Activated naive CD4-positive, alpha-beta T cell treated with anti-CD3 and anti-CD28 coated beads for 36 hours (primary cell): ENCODE measurements at regions of chr7 and their contacts with region 1.

Region 1: GRCh38 chr7:27196287-27196767 is 3.6 kb downstream of the HOXA13 start:
- DNase-seq: peak; percentile 92
- H3K4me3 Mint-ChIP-seq: no peak overlapping the region
- H3K27ac Mint-ChIP-seq: no peak overlapping the region
- H3K4me1 Mint-ChIP-seq: peaks cover 31% of the 10 kb centered on the region
- H3K27me3 Mint-ChIP-seq: peaks cover 76% of the 10 kb centered on the region

Region 2: DNA sequence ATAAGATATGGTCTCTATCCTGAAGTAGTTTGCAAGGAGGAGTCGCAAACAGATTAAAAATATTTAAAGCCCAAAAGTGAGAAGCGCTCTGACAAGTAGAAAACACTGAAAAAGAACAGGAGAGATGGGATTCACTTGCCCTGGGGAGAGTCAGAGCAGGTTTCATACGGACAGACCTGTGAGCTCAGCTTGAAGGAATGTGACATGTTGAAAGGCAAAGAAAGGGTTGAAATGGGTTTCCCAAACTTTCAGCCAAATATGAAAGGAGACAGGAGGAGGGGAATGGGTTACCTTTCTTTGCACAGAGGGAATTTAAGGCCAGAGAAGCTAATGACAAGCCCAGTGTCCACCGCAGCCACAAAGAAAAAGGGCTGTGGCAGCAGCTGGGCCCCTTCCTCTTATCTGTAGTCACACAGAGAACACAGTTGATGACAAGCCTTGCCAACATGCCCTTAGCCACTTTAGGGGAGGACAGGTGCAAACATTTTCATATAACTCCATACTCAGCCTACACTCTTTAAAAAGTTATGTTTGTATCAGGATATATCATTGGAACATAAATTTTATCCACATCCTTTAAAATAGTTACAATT is 115.4 kb before region 1 on chr7:
- CTCF ChIA-PET with region 1: no interaction called
- intact Hi-C with region 1: no loop called
- DNase-seq: no peak
- H3K4me3 Mint-ChIP-seq: no peak overlapping the region
- H3K27ac Mint-ChIP-seq: no peak overlapping the region
- H3K4me1 Mint-ChIP-seq: no peaks in the 10 kb centered on the region
- H3K27me3 Mint-ChIP-seq: peaks cover 3% of the 10 kb centered on the region

Region 3: DNA sequence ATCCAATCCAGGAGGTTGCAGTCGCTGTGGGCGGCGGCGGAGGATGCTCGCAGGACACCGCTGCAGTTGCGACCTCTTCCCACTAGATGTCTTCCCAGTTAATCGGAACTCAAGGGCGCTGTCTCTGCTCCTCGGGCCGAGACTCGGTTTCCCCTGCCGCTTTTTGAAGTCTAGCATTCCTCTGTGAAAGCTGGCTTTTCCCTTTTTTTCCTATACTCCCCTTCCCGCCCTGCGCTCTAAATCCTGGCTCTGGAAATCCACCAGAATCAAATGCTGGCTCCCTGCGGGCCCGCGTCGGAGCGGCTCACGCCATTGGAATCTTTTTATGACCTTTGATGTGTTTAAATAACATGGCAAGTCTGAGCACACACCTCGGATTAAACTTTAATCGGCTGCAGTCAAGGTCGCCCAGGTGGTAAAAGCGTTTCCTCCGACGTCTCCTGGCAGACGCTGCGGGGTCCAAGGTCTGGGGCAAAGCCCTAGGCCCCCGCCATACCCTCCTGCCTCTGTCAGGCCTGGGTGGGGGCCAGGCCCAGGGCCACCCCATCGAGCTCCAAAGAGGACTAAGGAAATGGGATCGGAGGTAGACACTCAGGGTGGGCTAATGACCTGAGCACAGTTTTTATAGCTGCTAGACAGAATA is 14.2 kb after region 1 on chr7:
- CTCF ChIA-PET with region 1: interaction called, 12 read pairs
- intact Hi-C with region 1: no loop called
- DNase-seq: peak; percentile 67
- H3K4me3 Mint-ChIP-seq: no peak overlapping the region
- H3K27ac Mint-ChIP-seq: no peak overlapping the region
- H3K4me1 Mint-ChIP-seq: peaks cover 20% of the 10 kb centered on the region
- H3K27me3 Mint-ChIP-seq: peaks cover 80% of the 10 kb centered on the region

Region 4: DNA sequence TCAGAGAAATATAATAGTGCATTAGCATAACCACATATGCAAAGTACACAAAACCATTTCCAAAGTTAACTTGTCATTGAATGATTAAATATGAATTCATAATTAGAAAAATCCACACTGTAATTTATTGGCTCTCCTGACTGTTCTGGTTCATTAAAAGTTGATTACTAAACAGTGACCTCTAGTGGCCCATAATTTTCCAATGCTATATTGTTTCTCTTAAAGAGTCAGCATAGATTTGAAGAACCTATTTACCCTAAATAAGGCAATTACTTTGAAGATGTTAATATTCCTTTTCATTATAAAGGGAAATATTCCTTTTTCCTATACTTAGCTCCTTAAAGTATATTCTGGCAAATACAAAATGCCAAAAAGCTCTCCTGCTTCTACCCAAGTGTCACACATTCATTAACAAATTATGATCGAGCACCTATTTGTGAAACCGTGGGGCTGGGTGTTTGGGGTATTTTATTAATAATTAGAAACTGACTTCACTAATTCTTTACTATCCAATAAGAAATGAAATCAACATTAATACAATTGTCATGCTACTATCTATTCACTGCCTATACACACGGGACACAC is 380.1 kb after region 1 on chr7:
- CTCF ChIA-PET with region 1: interaction called, 6 read pairs
- intact Hi-C with region 1: loop called (anchors 1 kb)
- DNase-seq: no peak
- H3K4me3 Mint-ChIP-seq: no peak overlapping the region
- H3K27ac Mint-ChIP-seq: no peak overlapping the region
- H3K4me1 Mint-ChIP-seq: no peaks in the 10 kb centered on the region
- H3K27me3 Mint-ChIP-seq: no peaks in the 10 kb centered on the region

Region 5: DNA sequence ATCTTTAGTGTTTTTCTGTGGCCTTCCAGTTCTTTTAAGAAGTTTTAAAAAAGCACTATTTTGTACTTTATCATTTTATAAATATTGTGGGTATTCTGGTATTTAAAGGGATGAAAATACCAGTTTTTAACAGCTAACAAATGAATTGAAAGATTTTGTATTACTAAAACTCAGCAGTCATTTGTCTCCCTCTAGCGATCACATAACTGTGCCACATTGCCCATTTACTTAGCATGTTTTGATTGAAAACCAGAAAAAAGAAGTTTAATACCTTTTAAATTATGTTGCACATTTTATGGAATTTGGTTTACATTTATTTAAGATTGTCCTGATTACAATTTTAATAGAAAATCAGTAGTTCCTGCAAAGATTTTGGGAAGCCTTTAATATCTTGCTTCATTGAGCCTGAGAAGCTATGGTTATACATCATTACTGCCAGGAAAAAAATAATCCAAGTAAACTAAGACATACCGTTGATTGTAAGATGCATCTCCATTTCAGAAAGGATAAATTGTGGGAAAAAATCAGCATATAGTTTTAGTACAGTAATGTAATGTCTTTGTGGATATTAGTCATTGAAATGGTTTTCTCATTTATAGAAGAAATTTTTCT is 578.5 kb after region 1 on chr7:
- CTCF ChIA-PET with region 1: no interaction called
- intact Hi-C with region 1: loop called (anchors 2 kb)
- DNase-seq: no peak
- H3K4me3 Mint-ChIP-seq: no peak overlapping the region
- H3K27ac Mint-ChIP-seq: no peak overlapping the region
- H3K4me1 Mint-ChIP-seq: peaks cover 21% of the 10 kb centered on the region
- H3K27me3 Mint-ChIP-seq: no peaks in the 10 kb centered on the region

Region 6: GRCh38 chr7:27921081-27921836 is 724.9 kb after region 1 on chr7:
- CTCF ChIA-PET with region 1: interaction called, 7 read pairs
- intact Hi-C with region 1: loop called (anchors 1 kb)
- DNase-seq: peak; percentile 48
- H3K4me3 Mint-ChIP-seq: no peak overlapping the region
- H3K27ac Mint-ChIP-seq: no peak overlapping the region
- H3K4me1 Mint-ChIP-seq: peaks cover 4% of the 10 kb centered on the region
- H3K27me3 Mint-ChIP-seq: no peaks in the 10 kb centered on the region

Region 7: GRCh38 chr7:28078036-28078901 is 881.9 kb after region 1 on chr7:
- CTCF ChIA-PET with region 1: interaction called, 5 read pairs
- intact Hi-C with region 1: loop called (anchors 1 kb)
- DNase-seq: peak; percentile 67
- H3K4me3 Mint-ChIP-seq: no peak overlapping the region
- H3K27ac Mint-ChIP-seq: no peak overlapping the region
- H3K4me1 Mint-ChIP-seq: no peaks in the 10 kb centered on the region
- H3K27me3 Mint-ChIP-seq: no peaks in the 10 kb centered on the region